A673 (cell line): ENCODE measurements at regions of chr2 and their contacts with region 1.

Region 1: DNA sequence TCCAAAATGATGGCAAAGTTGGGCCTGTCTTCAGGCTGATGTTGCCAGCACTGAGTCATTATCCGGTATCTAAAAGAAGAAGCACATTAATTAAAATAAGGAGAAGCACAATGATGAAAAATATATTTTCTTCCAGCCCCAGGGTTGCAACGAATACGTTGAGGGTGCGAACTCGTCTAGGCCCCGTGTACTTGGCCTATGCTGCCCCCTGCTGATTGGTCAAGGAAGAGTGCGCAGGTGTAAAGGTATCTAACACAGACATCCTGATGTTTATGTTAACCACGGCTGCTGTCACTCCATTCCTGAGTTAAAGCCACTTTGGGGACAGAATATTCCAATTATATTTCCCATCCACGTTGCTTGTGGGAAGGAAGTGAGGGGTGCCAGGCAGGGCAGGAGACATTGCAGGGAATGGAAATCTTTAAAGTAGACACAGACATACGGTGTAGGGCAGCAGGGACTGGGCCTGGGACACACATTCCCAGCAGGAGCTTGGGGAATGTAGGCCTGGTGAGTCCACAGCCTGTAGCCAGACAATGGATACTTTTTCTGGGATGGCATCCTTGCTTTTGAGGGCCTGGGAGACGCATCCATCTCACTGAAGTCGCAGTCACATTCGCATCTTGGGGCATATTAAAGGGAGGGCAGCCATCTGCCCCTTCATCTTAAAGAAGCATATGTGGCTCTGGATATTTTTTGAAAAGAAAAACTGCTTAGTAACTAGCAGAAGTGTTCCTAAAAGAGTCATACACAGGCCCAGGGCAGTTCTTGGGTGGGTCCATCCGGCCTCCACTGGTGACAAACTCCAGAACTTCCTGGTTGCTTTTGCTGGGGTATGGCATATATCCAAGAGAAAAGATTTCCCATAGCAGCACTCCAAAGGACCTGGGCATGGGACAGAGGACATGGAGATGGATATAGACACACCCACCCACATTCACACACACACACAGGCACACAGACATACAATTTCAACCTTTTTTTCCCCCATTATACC is 81.9 kb downstream of the CLIP4 start:
- DNase-seq: peak; percentile 79
- H3K4me3 ChIP-seq: no peak overlapping the region
- H3K27ac ChIP-seq: no peak overlapping the region
- H3K4me1 ChIP-seq: no peaks in the 10 kb centered on the region
- H3K27me3 ChIP-seq: no peaks in the 10 kb centered on the region
- CTCF ChIP-seq: peak; percentile 89

Region 2: GRCh38 chr2:28821295-28821958 is 375.7 kb before region 1 on chr2:
- CTCF ChIA-PET with region 1: no interaction called
- POLR2A ChIA-PET with region 1: no interaction called
- intact Hi-C with region 1: loop called (anchors 5 kb)
- DNase-seq: peak; percentile 70
- H3K4me3 ChIP-seq: no peak overlapping the region
- H3K27ac ChIP-seq: no peak overlapping the region
- H3K4me1 ChIP-seq: no peaks in the 10 kb centered on the region
- H3K27me3 ChIP-seq: no peaks in the 10 kb centered on the region
- CTCF ChIP-seq: peak; percentile 73

Region 3: GRCh38 chr2:28951910-28952815 is 244.9 kb before region 1 on chr2:
- CTCF ChIA-PET with region 1: no interaction called
- POLR2A ChIA-PET with region 1: no interaction called
- intact Hi-C with region 1: no loop called
- DNase-seq: no peak
- H3K4me3 ChIP-seq: no peak overlapping the region
- H3K27ac ChIP-seq: peak overlapping the region; percentile 19
- H3K4me1 ChIP-seq: peaks cover 12% of the 10 kb centered on the region
- H3K27me3 ChIP-seq: no peaks in the 10 kb centered on the region
- CTCF ChIP-seq: no peak

Region 4: GRCh38 chr2:28991021-28991420 is 206.1 kb before region 1 on chr2:
- CTCF ChIA-PET with region 1: no interaction called
- POLR2A ChIA-PET with region 1: no interaction called
- intact Hi-C with region 1: no loop called
- DNase-seq: no peak
- H3K4me3 ChIP-seq: no peak overlapping the region
- H3K27ac ChIP-seq: no peak overlapping the region
- H3K4me1 ChIP-seq: no peaks in the 10 kb centered on the region
- H3K27me3 ChIP-seq: no peaks in the 10 kb centered on the region
- CTCF ChIP-seq: no peak

Region 5: GRCh38 chr2:29164091-29164846 is 32.8 kb before region 1 on chr2:
- CTCF ChIA-PET with region 1: interaction called, 3 read pairs
- POLR2A ChIA-PET with region 1: no interaction called
- intact Hi-C with region 1: loop called (anchors 5 kb)
- DNase-seq: peak; percentile 79
- H3K4me3 ChIP-seq: no peak overlapping the region
- H3K27ac ChIP-seq: peak overlapping the region; percentile 39
- H3K4me1 ChIP-seq: peaks cover 44% of the 10 kb centered on the region
- H3K27me3 ChIP-seq: no peaks in the 10 kb centered on the region
- CTCF ChIP-seq: no peak

Region 6: DNA sequence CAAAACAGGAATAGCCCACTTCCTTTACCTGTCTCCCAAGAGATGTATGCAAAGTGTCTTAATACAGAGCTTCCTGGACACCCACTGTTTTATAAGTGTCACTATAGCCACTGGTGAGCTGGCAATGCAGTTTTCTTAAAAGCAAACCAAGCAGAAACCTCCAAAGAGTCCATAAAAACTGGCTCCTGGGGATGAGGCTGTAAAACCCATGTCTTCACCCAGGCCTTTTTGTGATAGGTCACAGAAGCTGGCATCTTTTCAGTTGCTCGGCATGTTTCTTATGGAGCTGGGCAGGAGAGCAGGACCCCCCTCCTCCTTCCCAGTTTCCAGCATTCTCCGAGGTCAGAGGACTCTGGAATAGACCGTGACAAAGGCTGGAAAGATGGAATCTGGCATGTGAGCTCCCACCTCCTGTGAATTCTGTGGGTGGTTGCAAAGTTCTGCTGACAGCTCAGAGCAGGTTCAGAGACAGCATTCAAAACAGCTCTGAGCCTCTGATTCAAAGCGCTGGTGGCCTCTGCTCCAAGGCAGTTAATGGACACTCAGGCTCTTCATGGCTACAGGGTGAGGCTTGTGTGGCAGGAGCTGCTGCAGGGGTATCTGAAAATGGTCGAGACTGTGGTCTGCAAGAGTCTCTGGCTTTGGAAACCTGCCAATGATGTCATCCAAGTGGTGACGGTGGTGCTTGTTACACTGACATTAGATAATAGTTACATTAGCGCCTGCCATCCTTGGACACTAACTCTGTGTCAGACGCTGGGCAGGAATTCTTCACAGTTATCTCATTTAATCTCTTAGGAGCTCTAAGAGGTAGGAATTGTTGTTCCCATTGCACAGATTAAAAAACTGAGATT is 201.5 kb after region 1 on chr2:
- CTCF ChIA-PET with region 1: no interaction called
- POLR2A ChIA-PET with region 1: no interaction called
- intact Hi-C with region 1: no loop called
- DNase-seq: peak; percentile 89
- H3K4me3 ChIP-seq: no peak overlapping the region
- H3K27ac ChIP-seq: no peak overlapping the region
- H3K4me1 ChIP-seq: peaks cover 38% of the 10 kb centered on the region
- H3K27me3 ChIP-seq: peaks cover 7% of the 10 kb centered on the region
- CTCF ChIP-seq: no peak